ENCODE measurements at regions of chr4 and their contacts with region 1.

Region 1: DNA sequence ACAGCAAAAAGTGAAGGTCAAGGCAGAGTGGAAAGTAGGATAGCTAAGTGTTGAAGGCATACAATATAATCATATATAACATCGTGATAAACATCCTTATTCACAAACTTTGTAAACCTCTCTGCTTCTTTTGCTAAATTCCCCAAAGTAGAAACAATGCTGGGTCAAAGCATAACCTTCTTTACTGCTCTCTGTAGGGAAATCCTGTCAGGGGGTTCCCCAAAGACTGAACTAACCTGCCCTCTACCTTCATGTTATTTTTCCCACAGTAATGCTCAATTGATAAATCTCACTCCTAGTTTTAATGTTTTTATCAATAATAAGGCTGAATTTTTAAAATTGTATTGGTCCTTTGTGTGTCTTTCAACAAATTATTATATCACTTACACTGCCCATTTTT is 55.7 kb downstream of the DCHS2 start:
- DNase-seq: no peak
- H3K27ac ChIP-seq: no peak overlapping the region
- CTCF ChIP-seq: no peak

Region 2: GRCh38 chr4:154205471-154205870 is 230.4 kb before region 1 on chr4:
- CTCF ChIA-PET with region 1: no interaction called
- POLR2A ChIA-PET with region 1: no interaction called
- DNase-seq: no peak
- H3K27ac ChIP-seq: no peak overlapping the region
- CTCF ChIP-seq: no peak

Region 3: DNA sequence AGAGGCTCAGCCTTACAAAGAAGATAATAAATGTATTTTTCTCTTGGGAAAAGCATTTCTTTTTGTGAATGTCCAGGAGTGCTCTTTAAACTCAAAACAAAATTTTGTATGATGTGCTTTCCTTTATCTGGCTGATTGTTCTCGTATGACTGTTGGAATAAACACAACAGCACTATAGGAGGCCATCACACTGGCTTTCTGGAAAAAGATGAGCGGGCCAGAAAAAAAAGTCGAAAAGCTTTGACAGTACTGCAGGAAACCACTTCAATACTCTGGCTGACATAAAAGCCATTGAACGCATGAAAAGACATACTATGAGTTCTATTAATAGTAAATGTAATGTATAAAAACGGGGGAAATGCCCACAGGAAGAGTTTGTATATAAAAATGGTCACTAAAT is 1582.5 kb after region 1 on chr4:
- CTCF ChIA-PET with region 1: interaction called, 11 read pairs
- POLR2A ChIA-PET with region 1: no interaction called
- DNase-seq: no peak
- H3K27ac ChIP-seq: no peak overlapping the region
- CTCF ChIP-seq: no peak